Activated CD4-positive, alpha-beta memory T cell treated with anti-CD3 and anti-CD28 coated beads for 36 hours (primary cell): ENCODE measurements at regions of chr13 and their contacts with region 1.

Region 1: DNA sequence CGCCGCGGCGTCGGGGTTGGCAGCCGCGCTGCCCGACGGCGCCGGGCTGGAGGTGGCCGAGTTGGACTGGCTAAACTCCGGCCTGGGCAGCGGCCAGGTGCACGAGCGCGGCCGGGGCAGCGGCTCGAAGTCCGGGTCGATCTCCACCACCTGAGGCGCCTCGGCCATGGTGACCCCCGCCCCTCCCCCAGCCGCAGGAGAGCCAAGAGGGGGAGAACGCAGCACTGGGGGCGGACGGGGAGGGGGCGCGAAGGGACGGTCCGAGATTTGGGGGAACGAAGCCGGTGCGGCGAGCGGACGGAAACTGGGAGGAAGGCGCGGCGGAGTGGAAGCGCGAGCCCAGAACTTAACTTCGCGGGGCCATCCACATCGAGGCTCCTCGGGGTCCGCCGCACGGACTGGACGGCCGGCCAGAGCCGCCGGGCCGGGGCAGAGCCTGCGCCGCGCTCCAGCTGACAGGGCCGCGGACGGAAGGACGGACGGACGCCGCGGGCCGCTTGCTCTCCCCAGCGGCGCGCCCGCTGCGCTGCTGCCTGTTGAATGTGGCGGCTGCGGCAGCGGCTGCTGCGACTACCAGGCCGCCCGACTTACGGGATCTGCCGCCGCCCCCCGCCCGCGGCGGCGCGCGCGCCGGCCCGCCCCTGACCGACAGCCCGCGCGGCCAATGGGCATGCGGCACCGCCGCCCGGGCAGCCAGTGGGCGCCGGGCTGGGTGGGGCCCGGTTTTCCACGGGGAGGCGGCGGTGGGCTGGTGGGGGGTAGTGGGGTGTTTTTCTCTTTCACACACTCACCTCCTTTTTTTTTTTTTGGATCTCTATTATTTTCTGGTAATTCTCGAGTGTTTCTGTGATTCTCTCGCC is at the start of gene FOXO1:
- DNase-seq: peak; percentile 91
- H3K4me3 Mint-ChIP-seq: peak within 1 kb of the TSS; percentile 91
- H3K27ac Mint-ChIP-seq: peak within 1 kb of the TSS; percentile 96
- H3K4me1 Mint-ChIP-seq: peaks cover 34% of the 10 kb centered on the region
- H3K27me3 Mint-ChIP-seq: no peaks in the 10 kb centered on the region
- total RNA-seq, gene FOXO1: 34.2 to 34.5 TPM

Region 2: DNA sequence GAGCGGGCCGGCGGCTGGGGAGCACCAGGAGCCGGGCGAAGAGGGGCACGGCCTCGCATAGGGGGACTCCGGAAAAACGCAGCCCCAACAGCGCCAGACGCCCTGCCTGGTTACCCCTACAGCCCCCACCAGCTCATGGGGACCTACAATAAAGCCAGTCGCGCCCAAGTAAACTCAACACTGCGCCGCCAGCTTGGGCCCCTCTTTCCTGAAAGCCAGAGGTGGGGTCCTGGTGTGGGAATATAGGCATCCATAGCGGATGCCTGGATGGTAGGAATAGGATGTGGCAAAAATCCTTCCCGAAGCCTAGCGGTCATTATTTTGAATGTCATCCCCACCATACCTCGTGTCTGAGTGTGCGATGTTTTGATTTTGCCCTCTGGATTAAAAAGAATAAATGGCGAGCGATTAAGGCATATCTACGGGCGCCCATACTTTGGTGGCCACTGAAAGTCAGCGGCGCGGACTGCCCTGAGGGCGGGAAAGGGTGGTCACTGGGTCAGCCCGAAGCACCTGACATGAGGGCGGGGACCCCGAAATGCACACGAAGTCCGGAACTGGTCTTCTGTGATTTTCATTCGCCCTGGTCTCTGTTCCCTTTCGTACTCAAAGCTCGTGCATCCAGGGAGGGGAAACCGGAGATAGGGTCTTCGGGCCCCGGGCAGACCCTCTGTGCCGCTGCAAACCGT is 1628.3 kb before region 1 on chr13 and contains the starts of genes NHLRC3 and PROSER1:
- CTCF ChIA-PET with region 1: no interaction called
- POLR2A ChIA-PET with region 1: no interaction called
- intact Hi-C with region 1: loop called (anchors 10 kb)
- DNase-seq: peak; percentile 87
- H3K4me3 Mint-ChIP-seq: peak within 1 kb of the TSS; percentile 89
- H3K27ac Mint-ChIP-seq: peak within 1 kb of the TSS; percentile 95
- H3K4me1 Mint-ChIP-seq: peaks cover 36% of the 10 kb centered on the region
- H3K27me3 Mint-ChIP-seq: no peaks in the 10 kb centered on the region
- total RNA-seq, gene NHLRC3: 15.2 to 16.8 TPM
- total RNA-seq, gene PROSER1: 59.9 to 70.5 TPM

Region 3: GRCh38 chr13:40060296-40061007 is 605.8 kb before region 1 on chr13:
- CTCF ChIA-PET with region 1: interaction called, 4 read pairs
- POLR2A ChIA-PET with region 1: no interaction called
- intact Hi-C with region 1: loop called (anchors 1 kb)
- DNase-seq: peak; percentile 83
- H3K4me3 Mint-ChIP-seq: peak overlapping the region; percentile 42
- H3K27ac Mint-ChIP-seq: peak overlapping the region; percentile 47
- H3K4me1 Mint-ChIP-seq: peaks cover 46% of the 10 kb centered on the region
- H3K27me3 Mint-ChIP-seq: no peaks in the 10 kb centered on the region

Region 4: DNA sequence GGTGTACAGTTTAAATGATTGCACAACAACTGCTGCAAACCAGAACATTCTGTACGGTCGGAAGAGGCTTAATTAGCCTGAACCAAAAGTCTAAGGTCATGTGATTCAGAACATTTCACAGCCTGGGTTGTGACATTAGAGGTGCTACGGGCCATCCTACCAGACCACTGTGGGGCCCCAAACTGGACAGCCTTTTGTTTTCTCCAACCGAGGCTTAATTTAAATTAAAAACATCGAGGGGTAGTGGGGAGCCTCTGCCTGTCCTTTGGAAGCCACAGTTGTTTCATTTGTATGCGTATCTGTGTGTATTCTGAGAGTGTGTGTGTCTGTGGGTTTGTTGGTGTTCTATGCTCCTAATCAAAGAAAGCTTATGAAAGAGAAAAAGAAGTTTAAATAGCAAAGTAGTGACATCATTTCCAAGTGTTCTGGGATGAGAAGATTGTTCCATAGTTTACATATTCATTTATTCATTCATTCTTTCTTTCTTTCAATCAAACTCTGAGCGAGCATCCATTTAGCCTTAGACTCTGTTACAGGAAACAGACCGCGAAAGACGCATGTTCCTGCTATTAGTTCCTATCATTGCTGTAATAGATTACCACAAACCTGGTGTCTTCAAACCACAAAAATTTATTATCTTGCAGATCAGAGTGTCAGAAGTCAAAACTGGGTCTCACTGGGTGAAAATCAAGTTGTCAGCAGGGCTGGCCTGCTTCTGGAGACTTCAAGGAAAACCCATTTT is 444.6 kb before region 1 on chr13:
- CTCF ChIA-PET with region 1: no interaction called
- POLR2A ChIA-PET with region 1: interaction called, 20 read pairs
- intact Hi-C with region 1: loop called (anchors 1 kb)
- DNase-seq: peak; percentile 54
- H3K4me3 Mint-ChIP-seq: peak overlapping the region; percentile 30
- H3K27ac Mint-ChIP-seq: peak overlapping the region; percentile 74
- H3K4me1 Mint-ChIP-seq: peaks cover 63% of the 10 kb centered on the region
- H3K27me3 Mint-ChIP-seq: no peaks in the 10 kb centered on the region

Region 5: DNA sequence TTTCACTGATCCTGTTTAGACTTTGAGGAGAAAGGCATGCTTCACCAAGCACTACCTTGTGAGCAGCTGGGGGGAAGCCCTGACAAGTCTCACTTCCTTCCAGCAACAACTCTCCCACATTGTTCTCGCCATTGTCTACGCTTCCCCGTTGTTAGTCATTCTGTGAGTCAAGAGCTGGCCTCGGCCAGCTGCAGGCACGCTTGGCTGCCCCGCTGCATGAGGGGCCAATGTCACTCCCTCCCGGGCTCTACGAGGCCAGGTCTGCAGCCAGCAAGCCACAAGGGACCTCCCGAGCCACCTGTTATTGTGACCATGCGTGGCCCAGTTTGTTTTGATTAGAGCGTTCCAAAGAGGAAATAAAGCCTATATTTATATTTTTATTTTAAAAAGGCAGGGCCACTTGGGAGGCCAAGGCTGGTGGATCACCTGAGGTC is 220.7 kb before region 1 on chr13:
- CTCF ChIA-PET with region 1: no interaction called
- POLR2A ChIA-PET with region 1: no interaction called
- intact Hi-C with region 1: no loop called
- DNase-seq: peak; percentile 65
- H3K4me3 Mint-ChIP-seq: no peak overlapping the region
- H3K27ac Mint-ChIP-seq: no peak overlapping the region
- H3K4me1 Mint-ChIP-seq: peaks cover 7% of the 10 kb centered on the region
- H3K27me3 Mint-ChIP-seq: no peaks in the 10 kb centered on the region

Region 6: DNA sequence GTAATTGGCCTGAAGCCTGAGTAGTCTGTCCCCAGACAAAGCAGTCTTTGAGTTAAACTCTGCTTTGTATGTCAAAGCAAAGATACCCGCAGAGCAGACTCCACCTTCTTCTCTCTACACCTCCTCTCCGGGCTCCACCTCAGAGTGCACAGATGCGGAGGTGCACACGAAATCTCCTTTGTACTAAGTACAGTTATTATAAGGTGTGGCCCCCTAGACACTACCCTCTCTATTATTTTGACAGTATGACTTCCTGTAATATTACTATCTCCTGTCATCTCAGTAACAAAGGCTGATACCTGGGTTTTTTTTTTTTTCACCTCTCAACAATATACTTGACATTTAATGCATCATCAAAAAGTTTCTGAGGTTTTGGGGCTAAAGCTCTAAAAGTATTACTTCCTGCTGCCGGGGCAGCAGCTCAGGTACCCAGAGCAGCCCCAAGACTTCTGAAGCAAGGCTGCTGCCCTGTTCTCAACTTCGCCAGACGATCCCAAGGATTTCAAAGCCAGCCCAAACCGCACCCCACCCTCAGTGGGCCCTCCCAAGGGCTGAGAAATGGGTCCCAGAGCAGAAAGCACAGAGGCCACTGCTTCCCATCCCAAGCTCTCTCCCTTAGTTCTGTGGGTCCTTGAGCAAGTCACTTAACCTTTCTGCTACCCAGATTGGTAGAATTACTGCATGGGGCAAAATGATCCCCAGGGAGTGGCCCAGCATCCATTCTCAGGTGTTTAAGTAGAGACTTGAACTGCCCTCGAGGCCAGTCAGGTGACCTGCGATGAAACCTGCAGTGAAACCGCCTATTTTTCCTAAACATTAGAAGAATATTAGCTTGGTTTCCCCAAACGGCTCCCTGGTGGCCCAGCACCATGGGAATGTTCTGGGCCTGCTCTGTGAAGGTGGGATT is 180.4 kb before region 1 on chr13:
- CTCF ChIA-PET with region 1: interaction called, 5 read pairs
- POLR2A ChIA-PET with region 1: interaction called, 12 read pairs
- intact Hi-C with region 1: loop called (anchors 1 kb)
- DNase-seq: peak; percentile 81
- H3K4me3 Mint-ChIP-seq: peak overlapping the region; percentile 24
- H3K27ac Mint-ChIP-seq: peak overlapping the region; percentile 75
- H3K4me1 Mint-ChIP-seq: peaks cover 78% of the 10 kb centered on the region
- H3K27me3 Mint-ChIP-seq: no peaks in the 10 kb centered on the region

Region 7: DNA sequence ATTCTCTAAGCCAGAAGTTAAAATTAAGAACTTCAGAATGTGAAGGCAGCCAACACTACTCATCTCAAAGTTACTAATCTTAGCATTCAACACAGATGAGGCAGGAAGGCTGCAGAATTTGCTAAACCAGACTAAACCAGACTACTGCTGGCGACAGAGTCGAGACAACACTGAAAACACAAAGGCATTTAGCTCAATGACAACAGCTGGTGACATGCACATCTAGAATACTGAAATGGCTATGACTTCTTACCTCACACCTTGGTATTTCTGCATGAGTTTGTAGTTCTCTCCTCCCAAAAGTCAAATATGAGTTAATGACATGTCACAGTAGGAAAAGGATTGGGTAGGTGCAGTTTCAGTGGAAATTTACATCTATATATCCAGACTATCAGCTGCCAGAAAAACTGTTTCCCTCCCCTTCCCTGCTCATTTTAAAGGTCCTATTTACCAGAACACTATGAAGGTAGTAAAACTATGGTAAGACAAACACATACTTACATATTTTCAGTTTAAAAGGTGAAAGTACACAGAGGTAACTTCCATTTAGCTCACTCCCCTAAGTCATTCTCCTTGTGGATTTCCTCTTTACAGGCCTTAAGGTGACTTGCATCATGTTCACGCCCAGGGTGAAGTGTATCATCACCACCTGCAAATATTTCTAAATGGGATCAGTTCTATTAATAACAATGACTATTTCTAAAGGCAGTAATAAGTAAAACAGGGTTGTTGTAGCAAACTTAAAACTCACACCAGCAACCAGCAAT is 21.3 kb before region 1 on chr13:
- CTCF ChIA-PET with region 1: interaction called, 3 read pairs
- POLR2A ChIA-PET with region 1: interaction called, 9 read pairs
- intact Hi-C with region 1: loop called (anchors 1 kb)
- DNase-seq: peak; percentile 60
- H3K4me3 Mint-ChIP-seq: no peak overlapping the region
- H3K27ac Mint-ChIP-seq: peak overlapping the region; percentile 87
- H3K4me1 Mint-ChIP-seq: peaks cover 96% of the 10 kb centered on the region
- H3K27me3 Mint-ChIP-seq: no peaks in the 10 kb centered on the region

Region 8: DNA sequence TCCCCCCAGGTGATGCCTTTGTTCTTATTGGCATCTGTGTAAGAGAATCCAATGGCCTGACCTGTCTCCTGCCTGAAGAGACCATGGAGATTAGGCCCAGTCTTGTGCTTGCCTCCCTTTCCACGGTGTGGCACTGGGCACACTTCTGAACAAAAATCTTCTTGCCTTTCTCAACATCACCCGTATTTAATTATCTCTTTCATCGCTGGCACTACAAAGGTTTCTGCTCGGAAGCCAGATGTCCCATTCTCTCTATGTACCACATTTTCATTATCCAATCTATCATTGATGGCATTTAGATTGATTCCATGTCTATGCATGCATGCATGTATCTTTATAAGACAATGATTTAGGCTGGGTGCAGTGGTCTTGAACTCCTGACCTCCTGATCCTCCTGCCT is 197.4 kb after region 1 on chr13:
- CTCF ChIA-PET with region 1: no interaction called
- POLR2A ChIA-PET with region 1: no interaction called
- intact Hi-C with region 1: no loop called
- DNase-seq: no peak
- H3K4me3 Mint-ChIP-seq: no peak overlapping the region
- H3K27ac Mint-ChIP-seq: no peak overlapping the region
- H3K4me1 Mint-ChIP-seq: no peaks in the 10 kb centered on the region
- H3K27me3 Mint-ChIP-seq: no peaks in the 10 kb centered on the region

Region 9: GRCh38 chr13:40982772-40983171 is 316.5 kb after region 1 on chr13:
- CTCF ChIA-PET with region 1: no interaction called
- POLR2A ChIA-PET with region 1: no interaction called
- intact Hi-C with region 1: loop called (anchors 1 kb)
- DNase-seq: peak; percentile 60
- H3K4me3 Mint-ChIP-seq: peak overlapping the region; percentile 81
- H3K27ac Mint-ChIP-seq: peak overlapping the region; percentile 92
- H3K4me1 Mint-ChIP-seq: peaks cover 61% of the 10 kb centered on the region
- H3K27me3 Mint-ChIP-seq: no peaks in the 10 kb centered on the region